ENCODE measurements at regions of chr9 and their contacts with region 1.

Region 1: GRCh38 chr9:128117613-128118471 is 9.7 kb downstream of the PTGES2 start:
- DNase-seq: peak; percentile 97
- H3K4me3 ChIP-seq: no peak overlapping the region
- H3K27ac ChIP-seq: peak overlapping the region in 1 of 4 donors; percentile 19
- H3K4me1 ChIP-seq: peaks cover 5 to 16% (median 9%) of the 10 kb centered on the region in 4 donors
- H3K27me3 ChIP-seq: no peaks in the 10 kb centered on the region
- CTCF ChIP-seq: peak; percentile 99 to 100 (median 100)
- EP300 ChIP-seq: no peak
- POLR2A ChIP-seq: no peak

Region 2: GRCh38 chr9:128034821-128035764 is 82.7 kb before region 1 on chr9:
- intact Hi-C with region 1: loop called (anchors 5 kb)
- DNase-seq: peak; percentile 93
- H3K4me3 ChIP-seq: no peak overlapping the region
- H3K27ac ChIP-seq: no peak overlapping the region
- H3K4me1 ChIP-seq: peaks cover 3 to 9% (median 5%) of the 10 kb centered on the region in 4 donors
- H3K27me3 ChIP-seq: no peaks in the 10 kb centered on the region
- CTCF ChIP-seq: peak; percentile 87 to 96 (median 93)
- EP300 ChIP-seq: no peak
- POLR2A ChIP-seq: no peak

Measured in esophagus muscularis mucosa (tissue), 4 donors.